Heart right ventricle (tissue), 16 donors: ENCODE measurements at regions of chr2 and their contacts with region 1.

Region 1: DNA sequence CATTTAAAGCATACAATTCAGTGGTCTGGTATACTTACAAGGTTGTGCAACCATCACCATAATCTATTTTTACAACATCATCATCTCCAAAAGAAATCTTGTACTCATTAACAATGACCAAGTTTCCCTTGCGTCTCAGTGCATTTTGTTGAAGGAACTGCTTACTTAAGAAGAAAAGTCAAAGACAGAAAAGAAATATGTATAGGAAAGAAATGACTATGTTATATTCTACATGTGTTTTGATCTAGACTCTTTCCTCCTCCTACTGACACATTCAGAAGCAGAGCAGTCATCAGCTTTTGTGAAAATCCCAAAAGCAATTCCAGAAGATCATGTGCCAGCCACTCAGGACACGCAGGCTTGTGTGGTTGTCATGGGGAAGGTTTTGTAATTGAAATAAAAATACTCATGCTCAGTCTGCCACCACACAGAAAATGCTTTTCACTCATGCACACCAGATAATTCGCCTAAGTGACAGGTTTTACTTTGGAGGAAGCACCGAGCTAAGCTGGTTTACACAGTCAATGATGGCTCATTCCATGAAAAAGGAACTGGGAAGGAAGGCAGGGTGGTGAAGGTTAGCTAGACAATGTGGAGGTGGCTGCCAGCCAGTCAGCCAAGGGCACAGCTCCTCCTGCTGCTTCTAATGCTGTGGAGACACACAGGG is 158.5 kb upstream of the REV1 start:
- DNase-seq: peak; percentile 30
- ATAC-seq: peak; percentile 63 to 89 (median 76)
- H3K4me3 ChIP-seq: no peak overlapping the region
- H3K27ac ChIP-seq: peak overlapping the region; percentile 31 to 85 (median 70)
- H3K4me1 ChIP-seq: peaks cover 7 to 40% (median 21%) of the 10 kb centered on the region in 9 donors
- H3K27me3 ChIP-seq: no peaks in the 10 kb centered on the region
- CTCF ChIP-seq: no peak

Region 2: GRCh38 chr2:99697811-99698568 is 49.7 kb after region 1 on chr2:
- intact Hi-C with region 1: loop called in 1 of 10 experiments (anchors 10 kb)
- DNase-seq: peak; percentile 27 to 28
- ATAC-seq: peak; percentile 78 to 93 (median 83)
- H3K4me3 ChIP-seq: no peak overlapping the region
- H3K27ac ChIP-seq: peak overlapping the region in 6 of 10 donors; percentile 2 to 73 (median 34)
- H3K4me1 ChIP-seq: peaks cover 0 to 49% (median 12%) of the 10 kb centered on the region in 9 donors
- H3K27me3 ChIP-seq: no peaks in the 10 kb centered on the region
- CTCF ChIP-seq: no peak